ENCODE measurements at regions of chr16 and their contacts with region 1.

Region 1: DNA sequence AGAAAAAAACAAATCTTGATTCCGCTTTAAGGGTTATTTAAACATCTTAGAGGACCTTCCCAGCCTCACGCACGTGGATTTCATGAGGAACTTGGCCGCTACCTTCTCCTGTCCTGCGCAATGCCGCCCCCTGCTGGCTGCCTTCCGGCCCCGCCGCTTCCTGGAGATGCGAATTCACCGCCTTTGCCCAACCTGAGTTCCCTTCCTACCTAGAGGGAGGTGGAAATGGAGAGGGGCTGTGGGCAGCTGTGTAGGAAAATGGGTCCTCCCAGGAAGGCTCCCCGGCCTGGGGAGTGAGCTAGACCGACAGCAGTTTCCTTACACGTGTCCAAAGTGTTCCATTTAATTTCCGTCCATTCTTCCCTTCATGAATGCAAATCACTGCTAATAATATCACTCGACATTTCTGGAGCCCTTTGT is 1.0 kb upstream of the ABCC12 start:
- DNase-seq: peak; percentile 52 to 60
- ATAC-seq: peak; percentile 78 to 85
- H3K4me3 ChIP-seq: peak overlapping the region in 2 of 4 donors; percentile 34 to 49
- H3K27ac ChIP-seq: peak overlapping the region in 1 of 4 donors; percentile 42
- H3K4me1 ChIP-seq: peaks cover 0 to 4% of the 10 kb centered on the region in 2 donors
- H3K27me3 ChIP-seq: no peaks in the 10 kb centered on the region
- CTCF ChIP-seq: peak; percentile 73 to 98 (median 86)
- POLR2A ChIP-seq: no peak

Region 2: GRCh38 chr16:47136101-47136820 is 1020.5 kb before region 1 on chr16:
- in situ Hi-C with region 1: loop called (anchors 10 to 25 kb)
- intact Hi-C with region 1: no loop called
- DNase-seq: no peak
- ATAC-seq: no peak
- H3K4me3 ChIP-seq: no peak overlapping the region
- H3K27ac ChIP-seq: peak overlapping the region in 3 of 4 donors; percentile 16 to 54 (median 32)
- H3K4me1 ChIP-seq: no peaks in the 10 kb centered on the region
- H3K27me3 ChIP-seq: no peaks in the 10 kb centered on the region
- CTCF ChIP-seq: no peak
- POLR2A ChIP-seq: no peak

Region 3: DNA sequence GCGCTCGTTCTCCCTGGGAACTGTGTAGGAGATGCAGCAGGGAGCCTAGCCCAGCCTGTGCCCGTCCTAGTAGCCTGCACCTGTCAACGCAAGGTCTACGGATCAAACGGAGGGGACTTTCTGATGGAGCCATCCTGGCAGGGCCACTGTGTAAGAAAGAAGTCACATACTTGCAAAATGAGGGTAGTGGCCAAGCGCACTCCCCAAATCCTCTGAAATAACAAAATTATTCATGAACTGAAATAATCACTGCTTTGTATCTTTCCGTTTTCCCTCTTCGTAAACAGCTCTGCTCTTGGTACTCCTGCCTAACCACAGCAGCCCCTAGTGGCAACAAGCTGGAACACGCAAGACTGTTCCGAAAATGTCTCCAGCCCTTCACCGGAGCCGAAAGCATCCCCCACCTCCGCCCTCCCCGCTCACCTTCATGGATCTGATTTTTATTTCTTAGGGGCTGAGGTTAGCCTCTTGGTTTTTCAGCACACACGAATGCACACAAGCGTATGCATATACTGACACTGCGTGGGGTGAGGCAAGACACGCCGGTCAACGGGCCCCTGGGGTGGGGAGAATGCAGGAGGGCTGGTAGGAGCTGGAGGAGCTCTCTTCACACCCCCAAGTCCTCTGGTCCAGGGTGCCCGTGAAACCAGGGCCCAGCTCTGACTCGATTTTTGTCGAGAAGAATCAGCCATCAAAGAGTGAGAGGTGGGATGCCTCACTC is 101.8 kb before region 1 on chr16:
- in situ Hi-C with region 1: no loop called
- intact Hi-C with region 1: loop called (anchors 10 kb)
- DNase-seq: peak in 1 of 2 donors; percentile 14
- ATAC-seq: peak; percentile 66 to 70
- H3K4me3 ChIP-seq: peak overlapping the region in 3 of 4 donors; percentile 22 to 32 (median 28)
- H3K27ac ChIP-seq: no peak overlapping the region
- H3K4me1 ChIP-seq: no peaks in the 10 kb centered on the region
- H3K27me3 ChIP-seq: no peaks in the 10 kb centered on the region
- CTCF ChIP-seq: peak; percentile 49 to 79 (median 50)
- POLR2A ChIP-seq: no peak